ENCODE measurements at regions of chr7 and their contacts with region 1.

Region 1: GRCh38 chr7:40899651-40900507 is 765.1 kb downstream of the SUGCT start:
- DNase-seq: peak; percentile 77
- H3K4me3 ChIP-seq: peak overlapping the region in 2 of 4 donors; percentile 3 to 27
- H3K27ac ChIP-seq: peak overlapping the region; percentile 57 to 81 (median 68)
- H3K4me1 ChIP-seq: peaks cover 0 to 28% (median 22%) of the 10 kb centered on the region in 4 donors
- H3K27me3 ChIP-seq: no peaks in the 10 kb centered on the region
- CTCF ChIP-seq: no peak
- EP300 ChIP-seq: no peak
- POLR2A ChIP-seq: no peak

Region 2: GRCh38 chr7:40986351-40986873 is 86.5 kb after region 1 on chr7:
- intact Hi-C with region 1: loop called (anchors 5 kb)
- DNase-seq: no peak
- H3K4me3 ChIP-seq: no peak overlapping the region
- H3K27ac ChIP-seq: peak overlapping the region in 3 of 4 donors; percentile 7 to 75 (median 38)
- H3K4me1 ChIP-seq: no peaks in the 10 kb centered on the region
- H3K27me3 ChIP-seq: no peaks in the 10 kb centered on the region
- CTCF ChIP-seq: no peak
- EP300 ChIP-seq: no peak
- POLR2A ChIP-seq: no peak

Measured in sigmoid colon (tissue), 7 donors.